Colonic mucosa (tissue), 4 donors: ENCODE measurements at regions of chr18 and their contacts with region 1.

Region 1: DNA sequence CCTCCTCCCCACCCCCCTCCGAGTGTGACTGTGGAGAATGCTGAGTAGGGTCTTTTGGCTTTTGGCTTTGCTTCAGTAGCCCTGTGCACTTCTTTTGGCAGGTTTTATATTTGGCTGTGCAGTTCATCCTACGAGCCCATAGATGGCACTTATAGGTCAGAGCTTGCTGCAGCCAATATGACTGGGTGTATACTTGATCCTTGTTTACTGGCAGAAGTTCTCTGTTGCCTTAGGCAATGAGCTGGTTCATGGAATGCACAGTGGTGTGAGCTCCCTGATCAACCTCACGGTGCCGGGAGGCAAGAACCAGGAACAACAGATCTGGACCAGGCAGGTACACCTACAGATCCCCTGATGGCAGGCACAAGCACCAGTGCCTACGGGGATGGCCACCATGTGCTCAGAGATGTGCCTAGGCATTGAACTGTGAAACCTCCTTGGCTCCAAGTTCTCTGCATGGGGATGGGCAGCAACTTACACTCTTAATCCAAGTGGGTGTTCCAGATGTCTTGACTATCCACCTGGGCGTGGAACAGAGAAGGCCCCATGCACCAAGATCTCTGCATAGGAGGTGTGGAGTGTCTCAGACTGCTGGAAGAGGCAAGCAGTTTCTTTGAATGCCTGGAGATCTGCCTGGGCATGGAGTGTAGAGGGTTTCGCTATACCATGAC is 190.4 kb downstream of the KIAA1328 start:
- DNase-seq: no peak
- H3K4me3 ChIP-seq: no peak overlapping the region
- H3K27ac ChIP-seq: no peak overlapping the region
- H3K4me1 ChIP-seq: no peaks in the 10 kb centered on the region
- H3K27me3 ChIP-seq: no peaks in the 10 kb centered on the region
- CTCF ChIP-seq: no peak

Region 2: GRCh38 chr18:36942264-36942663 is 77.0 kb before region 1 on chr18:
- intact Hi-C with region 1: no loop called
- DNase-seq: no peak
- H3K4me3 ChIP-seq: no peak overlapping the region
- H3K27ac ChIP-seq: no peak overlapping the region
- H3K4me1 ChIP-seq: no peaks in the 10 kb centered on the region
- H3K27me3 ChIP-seq: no peaks in the 10 kb centered on the region
- CTCF ChIP-seq: peak; percentile 43

Region 3: DNA sequence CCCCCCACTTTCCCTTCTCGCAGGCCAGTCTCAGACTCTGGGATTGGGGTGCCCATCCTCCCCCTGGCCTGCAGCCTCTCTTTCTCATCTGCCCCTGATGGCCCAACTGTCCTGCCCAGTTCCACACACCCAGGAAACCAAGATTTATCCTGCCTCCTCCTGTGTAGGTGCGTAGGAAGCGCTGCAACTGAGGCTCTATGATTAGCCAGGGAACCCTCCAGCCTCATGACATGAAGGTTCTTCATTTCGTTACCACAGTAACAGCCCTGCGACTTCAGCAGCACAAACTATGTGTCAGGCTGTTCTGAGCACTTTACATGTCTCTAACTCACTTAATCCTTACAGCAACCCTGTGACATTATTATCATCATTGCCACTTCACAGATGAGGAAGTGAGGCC is 240.4 kb after region 1 on chr18:
- intact Hi-C with region 1: loop called (anchors 5 kb)
- DNase-seq: no peak
- H3K4me3 ChIP-seq: no peak overlapping the region
- H3K27ac ChIP-seq: no peak overlapping the region
- H3K4me1 ChIP-seq: no peaks in the 10 kb centered on the region
- H3K27me3 ChIP-seq: peaks cover 10% of the 10 kb centered on the region
- CTCF ChIP-seq: no peak